Activated T-helper 1 cell treated with anti-CD3 and anti-CD28 coated beads, Interleukin-12 subunit alpha, Interleukin-12 subunit beta, Interleukin-2, Interleukin-4 antibody, amounts not matched to agents 30 ng/mL and 10 ng/mL and 1 ng/mL, durations not matched to agents 14 hours and 24 hours and 36 hours (primary cell): ENCODE measurements at regions of chr5 and their contacts with region 1.

Region 1: GRCh38 chr5:139197710-139198669 is at the start of gene SIL1:
- DNase-seq: peak; percentile 94
- H3K4me3 Mint-ChIP-seq: peak within 1 kb of the TSS; percentile 90
- H3K27ac Mint-ChIP-seq: peak within 1 kb of the TSS; percentile 89
- H3K4me1 Mint-ChIP-seq: peaks cover 32% of the 10 kb centered on the region
- H3K27me3 Mint-ChIP-seq: no peaks in the 10 kb centered on the region
- total RNA-seq, gene SIL1: 28.6 and 41.1 TPM in 2 replicates

Region 2: GRCh38 chr5:138331449-138332368 is 866.3 kb before region 1 on chr5 and contains the start of gene CDC25C:
- intact Hi-C with region 1: loop called (anchors 10 kb)
- DNase-seq: peak; percentile 97
- H3K4me3 Mint-ChIP-seq: peak within 1 kb of the TSS; percentile 85
- H3K27ac Mint-ChIP-seq: peak within 1 kb of the TSS; percentile 82
- H3K4me1 Mint-ChIP-seq: peaks cover 24% of the 10 kb centered on the region
- H3K27me3 Mint-ChIP-seq: no peaks in the 10 kb centered on the region
- total RNA-seq, gene CDC25C: 5.3 and 5.6 TPM in 2 replicates

Region 3: GRCh38 chr5:138654281-138654867 is 543.6 kb before region 1 on chr5:
- intact Hi-C with region 1: loop called (anchors 5 kb)
- DNase-seq: peak; percentile 50
- H3K4me3 Mint-ChIP-seq: peak overlapping the region; percentile 54
- H3K27ac Mint-ChIP-seq: peak overlapping the region; percentile 81
- H3K4me1 Mint-ChIP-seq: peaks cover 19% of the 10 kb centered on the region
- H3K27me3 Mint-ChIP-seq: peaks cover 77% of the 10 kb centered on the region

Region 4: DNA sequence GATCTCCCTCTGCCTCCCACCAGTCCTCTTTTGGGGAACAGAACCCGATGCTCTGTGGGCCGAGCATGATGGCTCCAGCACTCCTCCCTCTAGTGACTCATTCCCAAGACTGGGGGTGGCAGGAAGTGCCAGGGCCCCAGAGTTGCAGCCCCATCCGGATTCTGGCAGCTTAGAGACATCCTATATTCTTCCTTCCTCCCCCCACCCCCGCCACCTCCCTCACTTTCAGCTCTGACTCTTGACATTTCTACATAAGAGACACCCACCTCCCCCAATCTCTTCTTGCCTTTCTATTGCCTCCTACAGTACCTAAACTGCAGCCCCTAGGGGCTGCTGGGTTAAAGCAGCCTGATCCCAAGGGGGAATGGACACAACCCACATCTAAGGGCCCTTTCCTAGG is 48.4 kb after region 1 on chr5:
- intact Hi-C with region 1: loop called (anchors 2 kb)
- DNase-seq: peak; percentile 8
- H3K4me3 Mint-ChIP-seq: peak overlapping the region; percentile 62
- H3K27ac Mint-ChIP-seq: peak overlapping the region; percentile 83
- H3K4me1 Mint-ChIP-seq: peaks cover 32% of the 10 kb centered on the region
- H3K27me3 Mint-ChIP-seq: peaks cover 3% of the 10 kb centered on the region

Region 5: DNA sequence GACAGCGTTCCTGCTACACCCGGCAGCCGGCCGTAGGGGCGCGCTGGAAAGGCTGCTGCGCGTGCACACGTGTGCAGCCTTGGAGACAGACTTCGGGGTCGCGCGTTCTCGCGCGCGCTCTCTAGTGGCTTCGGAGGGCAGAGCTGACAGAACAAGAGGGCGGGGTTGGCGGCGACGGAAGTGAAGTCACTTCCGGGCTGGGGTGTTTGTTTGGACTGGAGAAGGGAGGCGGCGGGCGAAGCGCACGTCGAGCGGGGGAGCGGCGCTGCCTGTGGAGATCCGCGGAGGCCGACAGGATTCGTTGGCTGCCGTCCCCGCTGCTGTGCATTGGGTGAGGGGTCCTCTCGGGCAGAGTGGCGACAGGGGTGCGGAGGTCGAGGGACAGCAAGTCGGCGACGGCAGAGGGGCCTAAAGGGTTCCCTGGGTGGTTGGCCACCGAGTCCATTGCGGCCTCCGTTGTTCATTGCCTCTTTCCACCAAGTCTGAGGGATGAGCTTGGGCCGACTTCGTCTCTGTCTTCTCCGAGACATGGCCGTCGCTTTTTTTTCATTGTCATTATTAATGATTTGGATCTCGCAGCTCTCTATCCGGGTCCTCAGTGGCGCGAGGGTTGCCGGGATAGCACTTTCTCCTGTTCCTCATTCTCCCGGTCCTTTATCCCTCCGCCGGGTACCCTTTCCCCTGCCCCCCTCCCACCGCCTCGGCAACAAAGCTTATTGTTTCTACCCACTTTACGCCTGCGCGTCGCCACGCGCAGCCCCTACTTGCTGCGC is 143.8 kb after region 1 on chr5 and contains the start of gene PAIP2:
- intact Hi-C with region 1: loop called (anchors 2 kb)
- DNase-seq: peak; percentile 95
- H3K4me3 Mint-ChIP-seq: peak within 1 kb of the TSS; percentile 94
- H3K27ac Mint-ChIP-seq: peak within 1 kb of the TSS; percentile 95
- H3K4me1 Mint-ChIP-seq: peaks cover 46% of the 10 kb centered on the region
- H3K27me3 Mint-ChIP-seq: no peaks in the 10 kb centered on the region
- total RNA-seq, gene PAIP2: 88.4 and 97.3 TPM in 2 replicates

Region 6: DNA sequence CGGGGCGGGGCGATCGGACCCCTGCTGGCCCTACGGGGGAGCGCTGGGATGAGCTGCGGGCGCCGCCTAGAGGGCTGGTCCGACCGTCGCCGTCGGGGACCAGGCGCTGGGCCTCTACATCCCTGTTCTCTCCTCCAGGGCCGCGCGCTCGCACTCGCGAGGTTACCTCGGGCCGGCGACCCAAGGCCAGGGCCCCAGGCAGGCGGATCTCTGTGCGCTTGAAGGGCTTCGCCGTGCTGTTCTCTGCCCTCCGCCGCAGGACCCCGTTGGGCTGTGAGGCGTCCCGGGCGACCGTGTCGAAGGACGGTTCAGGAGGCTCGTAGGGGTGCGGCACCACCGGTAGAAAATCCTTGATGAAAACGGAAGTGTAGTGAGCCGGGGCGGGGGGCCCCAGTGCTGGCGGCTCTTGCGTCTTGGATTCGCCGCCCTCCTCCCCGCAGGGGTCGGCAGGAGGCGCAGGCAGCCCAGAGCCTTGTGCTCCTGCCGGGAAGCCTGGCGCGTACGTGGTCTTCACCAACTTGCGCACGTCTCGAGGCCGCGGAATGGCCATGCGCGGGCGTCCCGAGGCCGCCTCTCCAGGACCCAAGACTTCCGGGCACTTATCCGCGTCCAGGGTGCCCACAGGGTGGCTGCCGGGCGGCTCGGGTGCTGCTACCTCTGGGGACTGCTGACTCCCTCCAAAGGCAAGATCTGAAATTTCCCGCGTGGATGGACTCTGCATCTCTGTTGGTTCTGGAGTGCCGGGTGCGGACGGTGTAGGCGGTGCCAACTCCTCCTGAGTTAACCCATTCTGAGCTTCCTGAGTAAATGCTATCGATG is 194.9 kb after region 1 on chr5:
- intact Hi-C with region 1: loop called (anchors 5 kb)
- DNase-seq: peak; percentile 84
- H3K4me3 Mint-ChIP-seq: peak overlapping the region; percentile 96
- H3K27ac Mint-ChIP-seq: peak overlapping the region; percentile 95
- H3K4me1 Mint-ChIP-seq: peaks cover 58% of the 10 kb centered on the region
- H3K27me3 Mint-ChIP-seq: no peaks in the 10 kb centered on the region